SK-N-SH (cell line): ENCODE measurements at regions of chr17 and their contacts with region 1.

Region 1: DNA sequence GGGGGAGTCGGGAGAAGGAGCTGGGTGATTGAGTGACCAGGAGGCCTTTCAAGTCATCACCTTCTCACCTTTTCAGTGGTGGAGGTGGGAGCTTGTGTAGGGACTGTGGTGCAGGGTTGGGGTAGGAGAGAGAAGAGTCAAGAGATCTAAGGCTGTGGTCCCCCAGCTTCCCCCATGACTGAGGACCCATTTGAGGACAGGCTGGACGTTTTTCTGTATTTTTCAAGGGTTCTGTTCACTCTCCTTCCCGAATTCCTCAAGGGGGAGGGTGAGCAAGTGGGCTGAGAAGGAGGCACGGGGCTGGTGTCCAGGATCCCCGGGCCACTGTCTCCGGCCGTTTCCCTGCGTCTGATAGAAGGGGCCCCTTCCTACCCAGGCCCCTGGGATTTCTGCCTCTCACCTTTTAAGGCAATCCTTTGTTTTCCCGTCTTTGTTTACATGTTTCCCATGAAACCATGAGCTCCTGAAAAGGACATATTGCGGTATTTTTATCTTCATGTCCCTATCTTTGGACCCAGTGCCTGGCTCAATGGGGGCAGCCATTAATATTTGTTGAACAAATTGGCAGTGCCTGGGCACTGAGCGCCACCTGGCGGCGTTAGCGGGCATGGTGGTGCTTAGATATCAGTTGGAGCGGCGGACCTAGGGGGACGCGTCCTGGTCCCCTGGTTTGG is 9.2 kb upstream of the CD300A start:
- DNase-seq: peak; percentile 89
- H3K4me3 ChIP-seq: peak overlapping the region in 1 of 2 experiments; percentile 56; a peak in 1 of 4 replicates
- H3K27ac ChIP-seq: no peak overlapping the region
- H3K4me1 ChIP-seq: peaks cover 0 to 19% of the 10 kb centered on the region in 2 experiments; a peak in 2 of 4 replicates
- H3K27me3 ChIP-seq: no peaks in the 10 kb centered on the region
- CTCF ChIP-seq: peak; percentile 91
- EP300 ChIP-seq: no peak
- RAD21 ChIP-seq: peak; percentile 99

Region 2: GRCh38 chr17:74337834-74338500 is 119.3 kb before region 1 on chr17:
- CTCF ChIA-PET with region 1: interaction called, 10 read pairs
- POLR2A ChIA-PET with region 1: no interaction called
- DNase-seq: peak; percentile 36
- H3K4me3 ChIP-seq: no peak overlapping the region
- H3K27ac ChIP-seq: no peak overlapping the region
- H3K4me1 ChIP-seq: no peaks in the 10 kb centered on the region
- H3K27me3 ChIP-seq: no peaks in the 10 kb centered on the region
- CTCF ChIP-seq: no peak
- EP300 ChIP-seq: no peak
- RAD21 ChIP-seq: no peak

Region 3: GRCh38 chr17:74386386-74386785 is 70.9 kb before region 1 on chr17:
- CTCF ChIA-PET with region 1: interaction called, 67 read pairs
- POLR2A ChIA-PET with region 1: interaction called, 3 read pairs
- DNase-seq: no peak
- H3K4me3 ChIP-seq: no peak overlapping the region
- H3K27ac ChIP-seq: no peak overlapping the region
- H3K4me1 ChIP-seq: no peaks in the 10 kb centered on the region
- H3K27me3 ChIP-seq: no peaks in the 10 kb centered on the region
- CTCF ChIP-seq: no peak
- EP300 ChIP-seq: no peak
- RAD21 ChIP-seq: no peak

Region 4: DNA sequence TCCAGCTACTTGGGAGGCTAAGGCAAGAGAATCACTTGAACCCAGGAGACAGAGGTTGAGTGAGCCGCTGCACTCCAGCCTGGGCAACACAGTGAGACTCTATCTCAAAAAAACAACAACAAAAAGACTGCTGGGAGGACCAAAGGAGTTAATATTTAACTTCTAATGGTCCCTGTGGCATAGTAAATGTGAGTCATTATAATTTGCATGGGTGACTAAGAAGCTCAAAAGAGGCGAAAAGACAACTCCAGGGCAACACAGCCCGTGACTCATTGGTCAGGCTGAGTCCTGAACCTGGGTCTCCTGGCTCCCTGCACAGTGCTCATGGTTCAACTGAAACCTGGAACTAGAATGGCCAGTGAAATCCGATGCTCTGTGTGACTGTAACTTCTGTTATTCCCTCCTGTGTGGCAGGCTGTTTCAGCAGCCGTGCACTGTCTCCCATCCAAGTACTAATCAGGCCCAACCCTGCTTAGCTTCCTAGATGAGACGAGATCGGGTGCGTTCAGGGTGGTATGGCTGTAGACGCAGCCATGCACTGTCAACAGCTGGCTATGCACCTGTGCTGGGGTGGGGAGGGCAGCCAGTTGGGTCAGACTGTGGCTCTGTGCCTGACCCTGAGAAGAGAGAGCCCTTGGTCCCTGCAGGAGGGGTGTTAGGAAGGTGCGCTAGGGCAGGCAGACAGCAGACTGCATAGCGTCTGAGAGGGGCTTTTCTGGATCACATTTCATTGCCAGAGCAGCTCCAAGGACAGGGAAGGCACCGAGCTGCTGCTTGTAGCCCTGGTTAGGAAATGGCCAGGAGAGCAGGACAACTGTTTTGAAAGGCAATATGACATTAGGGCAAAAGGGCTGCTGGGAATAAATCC is 39.9 kb before region 1 on chr17:
- CTCF ChIA-PET with region 1: interaction called, 11 read pairs
- POLR2A ChIA-PET with region 1: no interaction called
- DNase-seq: no peak
- H3K4me3 ChIP-seq: no peak overlapping the region
- H3K27ac ChIP-seq: no peak overlapping the region
- H3K4me1 ChIP-seq: no peaks in the 10 kb centered on the region
- H3K27me3 ChIP-seq: no peaks in the 10 kb centered on the region
- CTCF ChIP-seq: no peak
- EP300 ChIP-seq: no peak
- RAD21 ChIP-seq: no peak

Region 5: GRCh38 chr17:74442670-74443515 is 14.4 kb before region 1 on chr17:
- CTCF ChIA-PET with region 1: interaction called, 55 read pairs
- POLR2A ChIA-PET with region 1: interaction called, 3 read pairs
- DNase-seq: peak; percentile 60
- H3K4me3 ChIP-seq: no peak overlapping the region
- H3K27ac ChIP-seq: no peak overlapping the region
- H3K4me1 ChIP-seq: peaks cover 0 to 10% of the 10 kb centered on the region in 2 experiments; a peak in 1 of 4 replicates
- H3K27me3 ChIP-seq: no peaks in the 10 kb centered on the region
- CTCF ChIP-seq: no peak
- EP300 ChIP-seq: no peak
- RAD21 ChIP-seq: no peak

Region 6: DNA sequence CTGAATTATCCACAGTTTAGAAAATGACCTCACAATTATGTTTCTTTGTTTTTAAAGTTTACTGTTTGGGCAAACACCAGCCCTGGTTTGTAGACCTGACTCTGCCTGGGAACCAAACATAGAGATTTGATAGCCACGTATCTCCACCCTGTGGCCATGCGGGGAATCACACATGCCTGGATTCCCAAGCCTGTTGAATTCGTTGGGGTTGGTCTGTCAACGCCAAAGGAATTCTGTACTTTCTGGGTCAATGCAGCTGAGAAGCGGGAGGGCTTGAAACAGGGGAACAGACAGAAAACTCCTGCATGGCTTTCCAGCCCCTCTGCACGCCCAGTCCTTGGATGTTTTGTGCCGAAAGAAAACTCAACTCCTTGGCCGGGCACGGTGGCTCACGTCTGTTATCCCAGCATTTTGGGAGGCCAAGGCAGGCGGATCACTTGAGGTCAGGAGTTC is 36.1 kb after region 1 on chr17:
- CTCF ChIA-PET with region 1: interaction called, 51 read pairs
- POLR2A ChIA-PET with region 1: no interaction called
- DNase-seq: peak; percentile 81
- H3K4me3 ChIP-seq: no peak overlapping the region; a peak in 1 of 4 replicates
- H3K27ac ChIP-seq: no peak overlapping the region
- H3K4me1 ChIP-seq: no peaks in the 10 kb centered on the region
- H3K27me3 ChIP-seq: no peaks in the 10 kb centered on the region
- CTCF ChIP-seq: peak; percentile 74
- EP300 ChIP-seq: no peak
- RAD21 ChIP-seq: peak; percentile 94

Region 7: DNA sequence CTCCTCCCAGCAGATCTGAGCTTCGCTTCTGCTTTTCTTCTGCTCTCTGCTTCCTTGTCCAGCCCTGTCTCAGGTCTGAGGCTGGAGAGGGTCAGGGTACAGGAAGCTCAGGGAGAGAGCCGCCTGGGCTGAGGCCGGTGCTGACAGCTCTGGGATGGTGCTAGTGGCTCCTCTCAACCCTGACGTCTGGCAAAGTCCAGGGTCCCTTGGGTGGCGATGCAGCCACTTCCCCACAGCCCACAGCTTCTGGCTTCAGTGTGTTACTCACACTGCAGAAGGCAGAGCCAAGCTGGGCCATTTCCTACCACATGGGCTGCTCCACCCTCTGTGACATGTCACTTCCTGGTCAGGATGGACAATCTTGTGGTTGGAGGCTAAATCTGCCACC is 88.6 kb after region 1 on chr17 and contains the start of gene CD300C:
- CTCF ChIA-PET with region 1: no interaction called
- POLR2A ChIA-PET with region 1: no interaction called
- DNase-seq: no peak
- H3K4me3 ChIP-seq: no peak within 1 kb of the TSS
- H3K27ac ChIP-seq: no peak within 1 kb of the TSS
- H3K4me1 ChIP-seq: no peaks in the 10 kb centered on the region
- H3K27me3 ChIP-seq: no peaks in the 10 kb centered on the region
- CTCF ChIP-seq: no peak
- EP300 ChIP-seq: no peak
- RAD21 ChIP-seq: no peak
- polyA plus RNA-seq, gene CD300C: not detected in 2 replicates